CD8-positive, alpha-beta T cell (primary cell): ENCODE measurements at regions of chr2 and their contacts with region 1.

Region 1: GRCh38 chr2:107258531-107259407 is 372.8 kb upstream of the ST6GAL2 start:
- DNase-seq: no peak
- ATAC-seq: no peak
- H3K4me3 ChIP-seq: no peak overlapping the region
- H3K4me3 Mint-ChIP-seq: no peak overlapping the region
- H3K27ac ChIP-seq: no peak overlapping the region
- H3K27ac Mint-ChIP-seq: no peak overlapping the region
- H3K4me1 ChIP-seq: no peaks in the 10 kb centered on the region
- H3K4me1 Mint-ChIP-seq: no peaks in the 10 kb centered on the region
- H3K27me3 ChIP-seq: no peaks in the 10 kb centered on the region
- H3K27me3 Mint-ChIP-seq: no peaks in the 10 kb centered on the region
- CTCF ChIP-seq: no peak

Region 2: GRCh38 chr2:108184419-108184818 is 925.6 kb after region 1 on chr2:
- CTCF ChIA-PET with region 1: no interaction called
- POLR2A ChIA-PET with region 1: no interaction called
- intact Hi-C with region 1: loop called in 1 of 2 experiments (anchors 5 kb)
- DNase-seq: no peak
- ATAC-seq: no peak
- H3K4me3 ChIP-seq: no peak overlapping the region
- H3K4me3 Mint-ChIP-seq: no peak overlapping the region
- H3K27ac ChIP-seq: no peak overlapping the region
- H3K27ac Mint-ChIP-seq: no peak overlapping the region
- H3K4me1 ChIP-seq: no peaks in the 10 kb centered on the region
- H3K4me1 Mint-ChIP-seq: no peaks in the 10 kb centered on the region
- H3K27me3 ChIP-seq: no peaks in the 10 kb centered on the region
- H3K27me3 Mint-ChIP-seq: peaks cover 13% of the 10 kb centered on the region
- CTCF ChIP-seq: no peak